Activated CD8-positive, alpha-beta T cell treated with anti-CD3 and anti-CD28 coated beads, Interleukin-2, amount 10 ng/mL, durations not matched to agents 7 days and 5 days (primary cell): ENCODE measurements at regions of chr1 and their contacts with region 1.

Region 1: GRCh38 chr1:111592389-111593361 is 26.9 kb upstream of the RAP1A start:
- DNase-seq: peak; percentile 96
- ATAC-seq: peak; percentile 96
- H3K4me3 Mint-ChIP-seq: peak overlapping the region; percentile 38
- H3K27ac Mint-ChIP-seq: peak overlapping the region; percentile 82
- H3K4me1 Mint-ChIP-seq: peaks cover 66% of the 10 kb centered on the region
- H3K27me3 Mint-ChIP-seq: no peaks in the 10 kb centered on the region

Region 2: GRCh38 chr1:111516005-111516535 is 76.6 kb before region 1 on chr1:
- CTCF ChIA-PET with region 1: interaction called, 37 read pairs
- POLR2A ChIA-PET with region 1: interaction called, 20 read pairs
- DNase-seq: peak; percentile 71
- ATAC-seq: peak; percentile 64
- H3K4me3 Mint-ChIP-seq: peak overlapping the region; percentile 56
- H3K27ac Mint-ChIP-seq: peak overlapping the region; percentile 86
- H3K4me1 Mint-ChIP-seq: peaks cover 46% of the 10 kb centered on the region
- H3K27me3 Mint-ChIP-seq: no peaks in the 10 kb centered on the region

Region 3: GRCh38 chr1:111565079-111565478 is 27.6 kb before region 1 on chr1:
- CTCF ChIA-PET with region 1: no interaction called
- POLR2A ChIA-PET with region 1: no interaction called
- DNase-seq: no peak
- ATAC-seq: no peak
- H3K4me3 Mint-ChIP-seq: no peak overlapping the region
- H3K27ac Mint-ChIP-seq: no peak overlapping the region
- H3K4me1 Mint-ChIP-seq: peaks cover 10% of the 10 kb centered on the region
- H3K27me3 Mint-ChIP-seq: no peaks in the 10 kb centered on the region

Region 4: GRCh38 chr1:111603979-111604378 is 11.3 kb after region 1 on chr1:
- CTCF ChIA-PET with region 1: interaction called, 48 read pairs
- POLR2A ChIA-PET with region 1: interaction called, 98 read pairs
- DNase-seq: peak; percentile 92
- ATAC-seq: peak; percentile 98
- H3K4me3 Mint-ChIP-seq: peak overlapping the region; percentile 40
- H3K27ac Mint-ChIP-seq: peak overlapping the region; percentile 92
- H3K4me1 Mint-ChIP-seq: peaks cover 73% of the 10 kb centered on the region
- H3K27me3 Mint-ChIP-seq: no peaks in the 10 kb centered on the region

Region 5: DNA sequence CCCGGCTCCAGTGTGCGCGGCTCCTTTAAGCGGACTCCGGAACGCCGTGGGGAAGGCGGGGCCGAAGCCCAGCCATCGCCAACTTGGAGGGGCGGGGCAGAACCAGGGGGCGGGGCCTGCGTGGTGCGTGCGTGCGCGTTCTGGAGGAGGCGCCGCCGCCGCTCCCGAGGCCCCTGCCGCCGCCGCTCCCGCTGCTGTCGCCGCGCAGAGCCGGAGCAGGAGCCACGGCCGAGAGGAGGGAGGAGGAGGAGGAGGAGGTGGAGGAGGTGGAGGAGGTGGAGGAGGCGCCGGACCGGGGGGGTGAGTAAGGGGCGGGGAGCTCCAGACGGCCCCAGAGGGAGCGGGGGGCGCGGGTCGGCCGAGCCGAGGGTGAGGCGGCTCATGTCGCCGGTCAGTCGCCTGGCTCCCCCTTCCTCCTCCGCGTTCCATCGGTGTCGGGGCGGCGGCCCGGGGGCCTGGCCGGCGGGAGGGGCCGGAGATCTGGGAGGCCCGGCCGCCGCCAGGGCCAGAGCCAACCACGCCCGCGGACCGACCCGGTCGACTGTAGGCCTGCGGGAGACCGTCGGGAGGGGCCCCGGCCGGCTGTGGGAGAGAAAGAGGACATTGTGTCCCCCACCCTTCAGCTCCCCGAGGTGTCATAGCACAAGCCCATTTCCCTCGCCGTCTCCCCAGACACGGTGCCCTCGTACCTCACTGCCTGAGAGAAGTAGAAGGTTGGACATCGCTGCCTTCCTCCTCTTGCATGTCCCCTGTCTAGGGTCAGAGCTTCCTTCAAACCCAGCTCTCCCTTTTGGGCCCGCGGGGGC is 27.2 kb after region 1 on chr1 and contains the start of gene RAP1A:
- CTCF ChIA-PET with region 1: interaction called, 20 read pairs
- POLR2A ChIA-PET with region 1: interaction called, 250 read pairs
- DNase-seq: peak; percentile 96
- ATAC-seq: peak; percentile 77
- H3K4me3 Mint-ChIP-seq: peak within 1 kb of the TSS; percentile 95
- H3K27ac Mint-ChIP-seq: peak within 1 kb of the TSS; percentile 92
- H3K4me1 Mint-ChIP-seq: peaks cover 69% of the 10 kb centered on the region
- H3K27me3 Mint-ChIP-seq: no peaks in the 10 kb centered on the region
- total RNA-seq, gene RAP1A: 132 to 133 TPM

Region 6: DNA sequence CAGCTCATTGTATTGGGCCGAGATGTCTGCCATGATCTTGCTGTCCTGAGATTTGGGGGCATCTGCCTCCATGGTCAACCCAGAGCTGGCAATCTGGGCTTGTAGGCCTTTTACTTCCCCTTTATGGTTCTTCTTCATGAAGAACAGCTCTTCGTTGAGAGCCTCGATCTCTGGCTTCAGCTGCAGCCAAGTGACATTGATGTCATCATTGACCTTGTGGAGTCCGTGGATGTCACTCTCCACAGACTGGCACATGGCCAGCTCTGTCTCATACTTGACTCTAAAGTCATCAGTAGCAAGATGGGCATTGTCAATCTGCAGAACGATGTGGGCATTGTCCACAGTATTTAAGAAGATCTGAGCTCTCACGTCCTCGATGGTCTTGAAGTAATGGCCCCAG is 56.1 kb after region 1 on chr1:
- CTCF ChIA-PET with region 1: interaction called, 12 read pairs
- POLR2A ChIA-PET with region 1: no interaction called
- DNase-seq: no peak
- ATAC-seq: no peak
- H3K4me3 Mint-ChIP-seq: no peak overlapping the region
- H3K27ac Mint-ChIP-seq: no peak overlapping the region
- H3K4me1 Mint-ChIP-seq: peaks cover 66% of the 10 kb centered on the region
- H3K27me3 Mint-ChIP-seq: no peaks in the 10 kb centered on the region

Region 7: GRCh38 chr1:111755331-111756123 is 162.9 kb after region 1 on chr1 and contains the start of gene DDX20:
- CTCF ChIA-PET with region 1: interaction called, 3 read pairs
- POLR2A ChIA-PET with region 1: interaction called, 10 read pairs
- DNase-seq: peak; percentile 94
- ATAC-seq: peak; percentile 89
- H3K4me3 Mint-ChIP-seq: peak within 1 kb of the TSS; percentile 93
- H3K27ac Mint-ChIP-seq: peak within 1 kb of the TSS; percentile 99
- H3K4me1 Mint-ChIP-seq: peaks cover 57% of the 10 kb centered on the region
- H3K27me3 Mint-ChIP-seq: no peaks in the 10 kb centered on the region
- total RNA-seq, gene DDX20: 18.1 to 18.9 TPM